Gastrocnemius medialis (tissue), 4 donors: ENCODE measurements at regions of chr5 and their contacts with region 1.

Region 1: DNA sequence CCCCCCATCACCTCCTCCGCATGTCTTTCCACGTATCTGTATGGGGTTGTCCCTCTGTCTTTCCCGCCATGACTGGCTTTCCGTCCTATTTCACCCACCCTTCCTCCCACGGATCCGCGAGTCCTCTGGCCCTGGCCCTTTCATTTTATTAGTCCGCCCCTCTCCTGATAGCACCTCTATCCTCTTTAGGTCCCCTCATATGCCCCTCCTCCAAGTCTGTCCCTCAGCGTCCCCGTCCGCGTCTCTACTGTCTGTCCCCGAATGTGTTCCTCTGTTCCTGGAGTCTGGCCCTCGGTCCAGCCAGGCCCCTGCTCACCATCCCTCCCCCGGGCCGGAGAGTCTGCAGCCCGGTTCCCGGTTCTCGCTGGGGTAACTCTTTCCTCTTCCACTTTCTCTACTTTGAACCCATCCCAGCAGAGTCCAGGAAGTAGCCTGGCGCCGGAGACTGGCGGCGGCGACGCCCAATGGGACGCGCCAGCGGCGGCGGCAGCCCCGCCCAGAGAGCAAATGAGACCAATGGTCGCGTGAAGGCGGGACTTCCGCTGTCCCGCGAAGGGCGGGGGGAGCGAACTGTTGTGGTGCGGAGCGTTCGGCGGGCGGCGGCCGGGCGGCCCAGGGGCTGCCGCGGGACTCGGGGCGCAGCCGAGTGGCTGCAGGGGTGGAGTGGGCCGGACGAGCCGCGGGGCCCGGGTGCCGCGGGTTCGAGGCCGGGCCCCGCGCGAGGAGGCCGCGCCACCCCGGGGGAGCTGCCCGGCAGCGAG is at the start of gene SAP30L:
- DNase-seq: peak; percentile 87 to 95
- ATAC-seq: peak; percentile 94 to 96
- H3K4me3 ChIP-seq: peak within 1 kb of the TSS; percentile 83 to 96 (median 88)
- H3K27ac ChIP-seq: peak within 1 kb of the TSS; percentile 75 to 84 (median 82)
- H3K4me1 ChIP-seq: peaks cover 22 to 42% of the 10 kb centered on the region in 2 donors
- H3K27me3 ChIP-seq: no peaks in the 10 kb centered on the region
- CTCF ChIP-seq: no peak
- POLR2A ChIP-seq: peak; percentile 71 to 83
- total RNA-seq, gene SAP30L: 18.8 to 35.6 (median 25.5) TPM

Region 2: GRCh38 chr5:153445851-153446579 is 999.6 kb before region 1 on chr5:
- in situ Hi-C with region 1: no loop called
- intact Hi-C with region 1: no loop called
- DNase-seq: no peak
- ATAC-seq: no peak
- H3K4me3 ChIP-seq: no peak overlapping the region
- H3K27ac ChIP-seq: no peak overlapping the region
- H3K4me1 ChIP-seq: no peaks in the 10 kb centered on the region
- H3K27me3 ChIP-seq: no peaks in the 10 kb centered on the region
- CTCF ChIP-seq: no peak
- POLR2A ChIP-seq: no peak

Region 3: DNA sequence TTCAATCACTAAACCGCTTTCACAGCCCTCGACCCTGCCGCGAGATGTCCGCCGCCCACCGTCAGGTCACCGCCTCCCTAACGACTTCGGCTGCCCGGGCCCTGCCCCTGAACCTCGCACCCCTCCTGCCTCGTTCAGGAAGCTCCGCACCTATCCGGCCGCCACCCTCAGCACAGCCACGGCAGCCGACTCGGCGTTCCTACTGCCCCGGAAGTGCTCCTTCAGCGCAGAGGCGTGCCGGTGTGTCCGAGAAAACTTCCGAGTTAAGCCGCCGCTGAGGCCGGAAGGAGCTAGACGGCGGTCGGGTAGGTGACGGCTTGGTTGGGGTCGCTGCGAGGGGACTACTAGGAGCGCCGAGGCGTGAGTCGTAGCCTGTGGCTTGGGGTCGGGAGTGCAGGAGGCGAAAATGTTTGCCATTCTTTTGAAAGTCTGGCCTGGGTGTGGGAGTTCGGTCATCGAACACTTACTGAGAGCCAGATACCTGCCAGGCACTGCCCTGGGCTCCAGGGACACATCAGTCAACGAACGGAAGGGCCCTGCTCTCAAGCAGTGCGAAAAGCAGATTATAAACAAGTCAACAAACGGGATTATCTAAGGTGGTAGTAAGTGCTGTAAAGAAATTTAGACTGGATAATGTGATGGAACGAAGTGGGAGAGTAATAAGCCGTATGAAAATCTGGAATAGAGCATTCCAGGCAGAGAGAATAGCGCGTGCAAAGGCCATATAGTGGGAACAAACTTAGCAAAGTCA is 406.7 kb before region 1 on chr5 and contains the starts of genes FAM114A2 and MFAP3:
- in situ Hi-C with region 1: no loop called
- intact Hi-C with region 1: loop called (anchors 5 kb)
- DNase-seq: peak; percentile 82 to 83
- ATAC-seq: peak; percentile 96 to 98
- H3K4me3 ChIP-seq: peak within 1 kb of the TSS; percentile 75 to 93 (median 82)
- H3K27ac ChIP-seq: peak within 1 kb of the TSS; percentile 82 to 93 (median 88)
- H3K4me1 ChIP-seq: peaks cover 45 to 46% of the 10 kb centered on the region in 2 donors
- H3K27me3 ChIP-seq: no peaks in the 10 kb centered on the region
- CTCF ChIP-seq: peak in 1 of 5 experiments; percentile 7
- POLR2A ChIP-seq: peak; percentile 81 to 82
- total RNA-seq, gene FAM114A2: 12.2 to 19.0 (median 18.3) TPM
- total RNA-seq, gene MFAP3: 25.4 to 80.5 (median 28.7) TPM